ENCODE measurements at regions of chr3 and their contacts with region 1.

Region 1: DNA sequence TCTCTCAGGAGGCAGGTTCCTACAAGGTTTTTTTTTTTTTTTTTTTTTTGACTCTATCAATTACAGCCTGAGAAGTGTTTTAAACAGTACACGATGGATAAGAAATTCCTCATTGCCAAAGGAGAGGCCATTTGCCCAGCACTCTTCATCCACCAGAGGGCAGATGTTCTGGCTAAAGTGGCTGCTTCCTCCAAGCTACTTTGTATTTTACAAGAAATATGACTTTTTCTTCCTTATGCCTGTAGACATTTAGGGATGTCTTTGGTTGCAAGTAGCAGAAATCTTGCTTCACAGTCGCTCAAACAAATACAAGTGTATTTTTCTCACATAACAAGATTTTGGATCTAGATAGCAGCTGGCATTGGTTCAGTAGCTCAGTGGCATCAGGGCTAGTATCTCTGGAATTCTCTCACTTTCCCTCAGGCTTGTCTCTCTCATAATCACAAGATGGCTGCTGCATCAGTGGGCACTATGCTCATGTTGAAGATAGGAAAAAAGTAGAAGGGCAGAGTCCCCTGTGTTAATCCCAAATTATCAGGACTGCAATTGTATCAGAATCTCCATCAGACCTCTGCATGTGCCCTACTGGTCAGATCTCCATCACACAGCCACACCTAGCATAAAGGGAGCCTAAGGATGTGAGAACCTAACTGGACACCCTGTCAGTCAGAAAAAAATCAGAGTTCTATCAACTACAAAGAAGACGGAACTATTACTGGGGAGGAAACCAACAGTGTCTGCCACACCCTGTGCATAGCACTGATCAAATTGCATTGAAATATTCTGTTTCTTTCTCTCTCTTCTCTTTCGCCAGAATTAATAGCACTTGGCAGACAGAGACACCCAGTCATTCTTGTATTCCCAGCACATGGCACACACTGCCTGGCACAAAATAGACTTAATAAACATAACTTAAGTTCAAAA is 138.9 kb upstream of the COL8A1 start:
- DNase-seq: peak; percentile 39
- ATAC-seq: peak; percentile 82
- H3K4me3 Mint-ChIP-seq: no peak overlapping the region
- H3K27ac Mint-ChIP-seq: no peak overlapping the region
- H3K4me1 Mint-ChIP-seq: no peaks in the 10 kb centered on the region
- H3K27me3 Mint-ChIP-seq: no peaks in the 10 kb centered on the region
- CTCF ChIP-seq: peak; percentile 52

Region 2: GRCh38 chr3:99526921-99527320 is 27.4 kb after region 1 on chr3:
- CTCF ChIA-PET with region 1: interaction called, 16 read pairs
- POLR2A ChIA-PET with region 1: no interaction called
- DNase-seq: no peak
- ATAC-seq: no peak
- H3K4me3 Mint-ChIP-seq: no peak overlapping the region
- H3K27ac Mint-ChIP-seq: no peak overlapping the region
- H3K4me1 Mint-ChIP-seq: peaks cover 20% of the 10 kb centered on the region
- H3K27me3 Mint-ChIP-seq: no peaks in the 10 kb centered on the region
- CTCF ChIP-seq: no peak

Region 3: DNA sequence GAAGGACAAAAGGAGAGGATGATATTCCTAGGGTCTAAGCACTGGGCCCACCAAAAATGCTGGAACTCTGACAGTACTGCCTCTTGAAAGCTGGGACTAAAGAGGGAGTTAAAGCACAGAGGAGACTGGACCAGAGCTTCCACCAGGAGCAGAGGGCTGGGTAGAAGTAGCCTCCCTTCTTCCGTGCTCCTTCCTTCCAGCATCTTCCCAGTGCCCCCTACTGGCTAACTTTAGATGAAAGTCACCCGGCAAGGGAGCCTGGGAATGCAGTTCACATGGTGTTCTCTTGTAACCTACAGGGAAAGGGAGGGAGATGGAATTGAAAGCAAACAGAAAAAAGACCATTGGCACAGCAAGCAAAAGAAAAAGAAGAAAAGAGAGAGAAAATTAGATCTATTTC is 32.7 kb after region 1 on chr3:
- CTCF ChIA-PET with region 1: interaction called, 16 read pairs
- POLR2A ChIA-PET with region 1: no interaction called
- DNase-seq: peak; percentile 80
- ATAC-seq: peak; percentile 99
- H3K4me3 Mint-ChIP-seq: no peak overlapping the region
- H3K27ac Mint-ChIP-seq: no peak overlapping the region
- H3K4me1 Mint-ChIP-seq: peaks cover 23% of the 10 kb centered on the region
- H3K27me3 Mint-ChIP-seq: no peaks in the 10 kb centered on the region
- CTCF ChIP-seq: peak; percentile 46; the same call in 1 of the 2 replicates

Region 4: GRCh38 chr3:99731499-99731898 is 232.0 kb after region 1 on chr3:
- CTCF ChIA-PET with region 1: no interaction called
- POLR2A ChIA-PET with region 1: no interaction called
- DNase-seq: no peak
- ATAC-seq: no peak
- H3K4me3 Mint-ChIP-seq: no peak overlapping the region
- H3K27ac Mint-ChIP-seq: no peak overlapping the region
- H3K4me1 Mint-ChIP-seq: no peaks in the 10 kb centered on the region
- H3K27me3 Mint-ChIP-seq: no peaks in the 10 kb centered on the region
- CTCF ChIP-seq: no peak

Region 5: DNA sequence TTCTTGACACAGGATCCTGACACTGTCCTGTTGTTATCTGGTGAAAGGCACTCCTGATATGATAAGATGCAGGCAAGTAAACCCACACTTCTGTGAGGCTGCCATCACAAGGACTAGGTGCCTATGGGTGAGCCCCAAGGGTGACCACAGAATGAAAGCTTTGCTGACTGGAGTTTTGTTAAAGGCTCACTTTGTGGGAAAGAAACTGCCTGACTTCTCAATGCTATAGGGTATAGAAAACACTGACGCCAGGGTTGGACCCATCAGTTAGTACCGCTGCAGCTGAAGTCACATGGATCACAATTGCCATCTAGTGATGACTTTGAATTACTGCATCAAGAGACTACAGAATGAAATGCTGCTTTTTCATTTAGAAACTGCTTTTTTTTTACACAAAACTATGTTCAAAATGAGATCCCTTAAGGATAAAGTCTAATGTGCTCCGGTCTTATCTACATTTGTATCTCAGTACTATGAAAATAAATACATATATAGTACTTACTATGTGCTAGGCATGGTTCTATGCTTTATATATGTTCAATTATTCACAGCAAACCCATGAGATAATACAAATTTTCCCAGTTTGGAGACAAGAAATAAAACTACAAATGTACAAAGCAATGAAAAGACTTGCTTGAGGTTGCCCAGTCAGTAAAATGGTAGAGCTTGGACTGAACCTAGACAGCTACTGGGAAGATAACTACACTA is 253.9 kb after region 1 on chr3:
- CTCF ChIA-PET with region 1: interaction called, 22 read pairs
- POLR2A ChIA-PET with region 1: no interaction called
- DNase-seq: peak; percentile 25
- ATAC-seq: peak; percentile 96
- H3K4me3 Mint-ChIP-seq: no peak overlapping the region
- H3K27ac Mint-ChIP-seq: no peak overlapping the region
- H3K4me1 Mint-ChIP-seq: no peaks in the 10 kb centered on the region
- H3K27me3 Mint-ChIP-seq: no peaks in the 10 kb centered on the region; the same call in 1 of the 2 replicates
- CTCF ChIP-seq: peak; percentile 58

Measured in WTC11 (cell line).